Activated T-helper 1 cell treated with anti-CD3 and anti-CD28 coated beads, Interleukin-12 subunit alpha, Interleukin-12 subunit beta, Interleukin-2, Interleukin-4 antibody, amounts not matched to agents 30 ng/mL and 10 ng/mL and 1 ng/mL, durations not matched to agents 14 hours and 24 hours and 36 hours (primary cell): ENCODE measurements at regions of chr1 and their contacts with region 1.

Region 1: GRCh38 chr1:209674957-209675564 is at the start of gene G0S2:
- DNase-seq: peak; percentile 59
- H3K4me3 Mint-ChIP-seq: peak within 1 kb of the TSS; percentile 92
- H3K27ac Mint-ChIP-seq: peak within 1 kb of the TSS; percentile 94
- H3K4me1 Mint-ChIP-seq: peaks cover 87% of the 10 kb centered on the region
- H3K27me3 Mint-ChIP-seq: peaks cover 2% of the 10 kb centered on the region
- total RNA-seq, gene G0S2: 501 and 509 TPM in 2 replicates

Region 2: GRCh38 chr1:209516771-209517680 is 158.0 kb before region 1 on chr1:
- intact Hi-C with region 1: no loop called
- DNase-seq: no peak
- H3K4me3 Mint-ChIP-seq: no peak overlapping the region
- H3K27ac Mint-ChIP-seq: no peak overlapping the region
- H3K4me1 Mint-ChIP-seq: no peaks in the 10 kb centered on the region
- H3K27me3 Mint-ChIP-seq: peaks cover 4% of the 10 kb centered on the region

Region 3: DNA sequence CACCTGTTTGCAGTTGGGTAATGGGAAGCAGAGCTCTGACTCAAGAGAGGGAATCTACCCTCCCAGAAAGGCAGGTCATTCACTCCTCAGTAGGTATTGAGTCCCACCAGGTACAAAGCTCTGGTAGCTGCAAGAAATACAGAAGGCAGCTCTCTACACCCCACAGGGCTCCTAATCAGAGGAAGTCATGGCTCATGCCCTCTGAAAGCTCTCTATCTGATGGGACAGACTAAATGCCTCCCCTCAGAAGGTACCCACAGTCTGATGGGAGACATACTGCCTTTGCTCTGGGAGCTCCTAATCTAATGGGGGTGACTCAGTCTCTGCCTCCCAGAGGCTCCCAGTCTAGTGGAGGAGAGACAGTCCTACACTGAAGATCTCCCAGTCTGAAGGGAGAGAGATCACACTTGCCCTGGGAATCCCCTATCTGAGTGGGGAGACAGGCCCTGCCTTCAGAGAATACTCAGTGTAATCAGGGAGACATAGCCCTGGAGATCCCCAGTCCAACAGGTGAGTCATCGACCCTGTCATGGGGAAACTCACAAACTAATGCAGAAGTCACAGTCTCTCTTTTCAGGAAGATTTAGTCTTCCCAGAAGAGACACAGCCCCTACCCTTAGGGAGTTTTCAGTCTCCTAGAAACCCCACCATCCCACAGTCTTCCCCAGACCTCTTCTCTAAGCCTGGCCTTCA is 67.8 kb before region 1 on chr1:
- intact Hi-C with region 1: loop called (anchors 1 kb)
- DNase-seq: peak; percentile 39
- H3K4me3 Mint-ChIP-seq: no peak overlapping the region
- H3K27ac Mint-ChIP-seq: peak overlapping the region; percentile 66
- H3K4me1 Mint-ChIP-seq: peaks cover 15% of the 10 kb centered on the region
- H3K27me3 Mint-ChIP-seq: no peaks in the 10 kb centered on the region

Region 4: DNA sequence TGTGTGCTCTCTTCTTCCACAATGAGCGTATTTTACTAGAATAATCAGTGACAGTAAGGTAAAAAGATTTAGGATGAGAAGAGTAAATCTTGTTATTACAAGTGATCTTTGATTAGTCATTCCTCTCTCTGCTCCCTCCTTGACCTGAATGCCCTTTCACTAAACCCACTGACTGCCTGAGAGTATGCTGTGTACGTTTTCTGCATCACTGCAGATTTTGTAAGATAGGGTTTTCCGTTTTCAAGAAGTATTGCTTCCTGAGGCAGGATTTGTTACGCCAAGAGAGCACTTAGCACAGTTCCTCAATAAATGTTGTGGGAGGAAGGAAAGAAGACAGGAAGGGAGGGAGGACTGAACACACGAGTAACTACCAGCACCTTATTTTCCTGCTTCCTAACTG is 15.2 kb before region 1 on chr1:
- intact Hi-C with region 1: loop called (anchors 1 kb)
- DNase-seq: no peak
- H3K4me3 Mint-ChIP-seq: peak overlapping the region; percentile 16
- H3K27ac Mint-ChIP-seq: peak overlapping the region; percentile 88
- H3K4me1 Mint-ChIP-seq: peaks cover 53% of the 10 kb centered on the region
- H3K27me3 Mint-ChIP-seq: no peaks in the 10 kb centered on the region

Region 5: DNA sequence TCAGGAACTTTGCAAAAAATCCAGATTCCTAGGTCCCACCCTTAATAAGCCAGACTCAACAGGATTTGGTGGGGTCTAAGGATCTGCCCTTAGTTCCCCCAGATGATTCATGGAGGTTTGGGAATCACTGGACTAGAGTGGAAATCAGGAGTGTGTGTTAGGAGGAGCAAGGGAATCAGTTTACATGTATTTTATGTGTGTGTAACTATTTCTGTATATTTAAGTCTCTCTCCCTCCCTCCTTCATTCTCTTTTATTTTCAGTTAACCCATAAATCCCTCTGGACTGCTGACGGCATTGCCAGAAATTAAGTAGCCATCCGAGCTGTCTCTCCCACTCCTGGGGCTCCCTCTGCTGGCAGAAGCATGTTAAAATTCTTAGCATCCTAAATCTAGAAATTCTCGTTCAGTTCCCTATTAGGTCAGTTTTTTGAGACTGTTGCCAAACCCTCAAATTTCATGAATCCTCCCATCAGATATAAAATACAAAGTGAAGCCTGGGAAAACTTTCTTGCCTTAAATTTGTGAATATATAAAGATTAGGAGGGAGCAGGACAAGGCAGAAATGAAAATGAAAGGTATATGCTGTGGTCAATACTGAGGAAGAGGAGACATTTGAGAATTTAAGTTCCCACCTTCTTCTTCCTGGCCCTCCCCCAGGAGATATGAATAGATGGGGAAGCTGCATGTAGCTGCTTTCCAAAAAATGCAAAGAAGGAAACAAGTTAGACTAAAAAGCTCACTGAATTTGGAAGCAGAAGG is 17.9 kb after region 1 on chr1:
- intact Hi-C with region 1: loop called (anchors 1 kb)
- DNase-seq: peak; percentile 65
- H3K4me3 Mint-ChIP-seq: peak overlapping the region; percentile 3
- H3K27ac Mint-ChIP-seq: peak overlapping the region; percentile 74
- H3K4me1 Mint-ChIP-seq: peaks cover 70% of the 10 kb centered on the region
- H3K27me3 Mint-ChIP-seq: no peaks in the 10 kb centered on the region

Region 6: GRCh38 chr1:209736490-209737117 is 61.5 kb after region 1 on chr1:
- intact Hi-C with region 1: loop called (anchors 1 kb)
- DNase-seq: no peak
- H3K4me3 Mint-ChIP-seq: no peak overlapping the region
- H3K27ac Mint-ChIP-seq: peak overlapping the region; percentile 89
- H3K4me1 Mint-ChIP-seq: peaks cover 51% of the 10 kb centered on the region
- H3K27me3 Mint-ChIP-seq: no peaks in the 10 kb centered on the region

Region 7: DNA sequence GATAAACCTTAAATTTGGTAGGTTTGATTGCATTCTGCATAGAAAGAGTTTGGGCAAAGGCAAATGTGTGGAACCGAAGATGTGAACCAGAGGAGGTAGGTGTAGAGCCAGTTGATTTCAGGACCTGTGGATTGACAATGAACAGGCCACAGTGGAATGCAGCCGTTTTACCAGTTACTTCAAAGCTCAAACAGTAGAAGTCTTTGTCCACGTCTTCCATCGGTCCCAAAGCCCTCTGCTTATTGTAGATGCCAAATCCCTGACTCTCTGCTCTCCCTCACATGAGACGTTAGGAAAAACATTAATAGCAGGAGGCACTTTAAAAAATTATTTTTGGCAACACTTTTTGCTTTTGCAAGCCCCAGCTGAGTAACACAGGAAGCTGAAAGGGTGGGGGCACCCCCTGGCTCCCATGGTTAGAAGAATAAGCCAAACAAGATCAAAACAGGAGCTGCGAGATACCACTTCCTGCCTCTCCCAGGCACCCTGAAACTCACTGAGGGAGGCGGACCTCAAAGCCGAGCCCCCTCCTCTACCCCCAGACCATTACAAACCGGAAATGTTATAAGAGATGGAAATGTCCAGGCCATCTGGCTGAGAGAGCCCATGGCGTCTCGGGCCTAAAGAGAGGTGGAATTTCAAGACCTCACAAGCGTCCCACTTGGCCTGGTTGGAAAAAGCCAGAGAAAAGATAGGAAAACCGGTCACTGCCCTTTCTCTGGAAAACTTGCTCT is 94.3 kb after region 1 on chr1:
- intact Hi-C with region 1: loop called (anchors 1 kb)
- DNase-seq: peak; percentile 75
- H3K4me3 Mint-ChIP-seq: no peak overlapping the region
- H3K27ac Mint-ChIP-seq: no peak overlapping the region
- H3K4me1 Mint-ChIP-seq: peaks cover 39% of the 10 kb centered on the region
- H3K27me3 Mint-ChIP-seq: no peaks in the 10 kb centered on the region

Region 8: DNA sequence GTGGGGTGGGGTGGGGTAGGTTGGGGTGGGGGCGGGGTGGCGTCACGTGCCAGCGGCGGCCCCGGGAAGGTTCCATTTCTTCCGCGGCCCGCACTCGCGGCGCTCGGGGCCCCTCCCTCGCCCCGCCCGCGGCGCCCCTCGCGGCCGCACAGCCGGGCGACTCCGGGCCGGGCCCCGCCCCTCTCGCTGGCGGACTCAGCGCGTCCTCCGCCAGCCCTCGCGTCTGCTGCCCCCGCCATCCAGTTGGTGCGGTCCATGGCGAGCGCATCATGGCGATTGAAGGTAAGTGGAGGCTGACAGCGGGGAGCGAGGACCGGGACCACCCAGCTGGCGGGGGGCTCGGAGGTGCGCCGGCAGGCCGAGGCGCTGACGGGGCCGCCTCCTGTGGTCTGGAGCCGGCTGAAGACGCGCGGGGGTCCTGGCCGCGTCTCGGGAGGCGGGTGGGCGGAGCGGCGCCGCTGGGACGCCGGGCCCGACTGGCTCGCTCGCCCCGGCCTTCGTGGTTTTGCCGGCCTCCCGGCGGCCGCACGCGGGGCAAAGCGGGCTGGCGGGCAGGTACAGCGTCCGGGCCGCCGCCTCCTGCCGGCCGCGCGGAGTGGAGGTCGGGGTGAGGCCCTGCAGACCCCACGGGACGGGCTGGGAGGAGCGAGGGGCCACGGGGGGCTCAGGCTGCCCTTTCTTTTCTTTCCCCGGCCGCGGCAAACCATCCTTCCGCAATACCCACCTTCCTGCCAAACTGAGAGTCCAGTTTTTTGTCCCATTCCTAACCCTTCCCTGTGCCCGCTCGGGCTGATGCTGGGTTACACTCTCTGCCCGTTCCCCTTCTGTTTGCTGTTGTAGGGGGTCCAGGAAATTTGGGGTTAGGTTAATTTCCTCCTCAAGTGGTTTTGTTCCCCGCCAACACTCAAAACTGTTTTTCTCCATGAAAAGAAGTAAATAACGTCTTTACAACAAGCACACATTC is 263.2 kb after region 1 on chr1 and contains the start of gene SYT14:
- intact Hi-C with region 1: loop called (anchors 10 kb)
- DNase-seq: no peak
- H3K4me3 Mint-ChIP-seq: peak within 1 kb of the TSS; percentile 57
- H3K27ac Mint-ChIP-seq: peak within 1 kb of the TSS; percentile 19
- H3K4me1 Mint-ChIP-seq: peaks cover 12% of the 10 kb centered on the region
- H3K27me3 Mint-ChIP-seq: peaks cover 51% of the 10 kb centered on the region
- total RNA-seq, gene SYT14: not detected in 2 replicates